CD4-positive, alpha-beta T cell (primary cell): ENCODE measurements at regions of chr3 and their contacts with region 1.

Region 1: DNA sequence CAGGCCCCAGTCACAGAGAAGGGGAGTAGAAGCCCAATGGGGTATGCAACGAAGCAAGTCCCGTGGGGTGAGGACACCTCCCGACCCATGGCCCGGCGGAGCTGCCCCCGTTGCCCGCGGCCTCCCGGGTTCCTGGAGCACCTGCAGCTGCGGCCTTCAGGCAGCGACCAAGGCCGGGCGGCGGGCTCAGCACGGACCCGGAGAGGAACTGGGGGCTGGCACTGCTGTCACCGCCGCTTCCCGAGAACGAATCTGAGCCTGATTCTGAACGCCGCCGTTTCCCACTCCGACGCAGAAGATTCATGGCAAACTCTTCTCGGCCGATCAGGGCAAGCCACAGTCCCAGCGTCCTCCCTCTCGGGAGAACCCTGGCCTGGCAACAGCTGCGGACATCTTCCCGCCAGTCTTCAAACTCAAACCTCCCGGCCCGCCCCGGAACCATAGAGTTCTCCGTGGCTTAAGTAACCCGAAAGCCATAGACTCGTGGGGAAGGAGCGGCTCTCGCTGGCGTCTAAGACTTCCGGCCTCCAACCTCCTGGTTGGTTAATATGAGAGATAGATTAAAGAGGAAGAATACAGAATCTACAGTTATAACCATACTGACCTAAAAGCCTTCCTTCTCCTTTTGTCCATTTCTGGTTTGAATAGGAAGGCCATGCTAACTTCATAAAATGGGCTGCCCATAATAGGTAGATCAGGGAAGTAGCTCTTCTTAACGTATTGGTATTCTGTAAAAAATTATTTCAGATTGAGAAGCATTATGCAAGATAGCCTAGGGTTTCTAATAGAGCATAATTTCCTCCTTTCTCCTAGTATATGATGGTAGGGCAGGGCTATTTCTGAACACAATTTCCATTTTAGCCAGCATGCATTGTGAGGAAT is at the start of gene POLQ:
- DNase-seq: peak; percentile 76 to 94 (median 84)
- ATAC-seq: peak; percentile 99
- H3K4me3 ChIP-seq: peak within 1 kb of the TSS; percentile 66
- H3K4me3 Mint-ChIP-seq: peak within 1 kb of the TSS; percentile 85
- H3K27ac ChIP-seq: peak within 1 kb of the TSS; percentile 49 to 59
- H3K27ac Mint-ChIP-seq: peak within 1 kb of the TSS; percentile 82
- H3K4me1 ChIP-seq: peaks cover 8% of the 10 kb centered on the region
- H3K4me1 Mint-ChIP-seq: peaks cover 14% of the 10 kb centered on the region
- H3K27me3 ChIP-seq: no peaks in the 10 kb centered on the region
- H3K27me3 Mint-ChIP-seq: no peaks in the 10 kb centered on the region
- CTCF ChIP-seq: no peak
- total RNA-seq, gene POLQ: 0.17 to 0.30 TPM

Region 2: GRCh38 chr3:121654493-121655385 is 108.9 kb after region 1 on chr3:
- CTCF ChIA-PET with region 1: no interaction called
- POLR2A ChIA-PET with region 1: interaction called, 3 read pairs
- intact Hi-C with region 1: loop called in 1 of 2 experiments (anchors 5 kb)
- DNase-seq: peak in 3 of 14 experiments; percentile 36 to 60 (median 40)
- ATAC-seq: peak; percentile 73
- H3K4me3 ChIP-seq: no peak overlapping the region
- H3K4me3 Mint-ChIP-seq: peak overlapping the region; percentile 34
- H3K27ac ChIP-seq: peak overlapping the region in 1 of 2 donors; percentile 62
- H3K27ac Mint-ChIP-seq: peak overlapping the region; percentile 76
- H3K4me1 ChIP-seq: peaks cover 52% of the 10 kb centered on the region
- H3K4me1 Mint-ChIP-seq: peaks cover 86% of the 10 kb centered on the region
- H3K27me3 ChIP-seq: no peaks in the 10 kb centered on the region
- H3K27me3 Mint-ChIP-seq: no peaks in the 10 kb centered on the region
- CTCF ChIP-seq: no peak

Region 3: DNA sequence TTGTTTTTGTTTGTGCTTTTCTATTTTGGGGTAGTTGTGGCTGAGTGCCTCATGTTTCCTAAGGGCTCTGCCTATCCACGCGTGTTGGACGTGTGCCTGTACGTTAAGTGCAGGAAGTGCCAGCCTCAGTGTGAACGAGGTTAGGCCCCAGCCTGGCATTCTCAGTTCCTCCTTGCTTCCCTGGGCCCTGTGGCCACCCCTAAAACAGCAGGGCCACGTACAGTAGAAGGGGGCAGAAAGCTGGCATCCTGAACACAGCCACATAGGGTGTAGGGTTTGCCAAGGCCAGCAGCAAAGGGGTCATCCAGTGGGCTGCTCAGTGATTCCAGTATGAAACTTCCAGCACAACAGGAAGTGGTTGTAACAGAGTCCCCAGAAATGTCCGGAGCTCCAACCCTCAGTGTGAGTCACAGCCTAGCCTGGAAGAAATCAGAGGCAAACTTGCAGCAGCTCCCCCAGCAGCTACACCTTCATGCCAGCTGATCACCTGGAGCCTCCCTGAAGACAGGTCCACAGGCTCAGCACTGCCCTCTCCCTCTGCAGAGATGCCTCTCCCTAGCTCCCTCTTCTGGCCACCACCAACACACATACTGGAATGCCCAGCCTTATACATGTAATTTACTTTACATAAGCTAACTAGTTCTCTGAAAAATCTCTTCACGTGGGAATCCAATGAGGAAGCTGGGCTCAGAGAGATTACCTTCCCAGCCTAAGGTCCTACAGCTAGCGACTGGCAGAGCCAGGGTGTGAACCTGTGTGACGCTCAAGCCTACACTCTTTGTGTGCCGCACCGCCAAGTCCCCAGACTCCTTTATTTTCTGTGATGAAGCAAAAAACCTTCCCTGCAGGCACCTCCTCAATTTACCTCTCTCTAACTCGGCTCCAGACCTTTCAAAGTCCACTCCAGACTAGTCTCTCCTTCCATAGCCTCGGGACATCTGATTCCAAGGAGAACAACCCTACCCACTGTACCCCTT is 449.6 kb after region 1 on chr3:
- CTCF ChIA-PET with region 1: interaction called, 3 read pairs
- POLR2A ChIA-PET with region 1: no interaction called
- intact Hi-C with region 1: loop called (anchors 2 to 5 kb)
- DNase-seq: peak in 4 of 14 experiments; percentile 39 to 63 (median 48)
- ATAC-seq: peak; percentile 57
- H3K4me3 ChIP-seq: no peak overlapping the region
- H3K4me3 Mint-ChIP-seq: no peak overlapping the region
- H3K27ac ChIP-seq: no peak overlapping the region
- H3K27ac Mint-ChIP-seq: no peak overlapping the region
- H3K4me1 ChIP-seq: peaks cover 11% of the 10 kb centered on the region
- H3K4me1 Mint-ChIP-seq: peaks cover 10% of the 10 kb centered on the region
- H3K27me3 ChIP-seq: no peaks in the 10 kb centered on the region
- H3K27me3 Mint-ChIP-seq: no peaks in the 10 kb centered on the region
- CTCF ChIP-seq: no peak

Region 4: DNA sequence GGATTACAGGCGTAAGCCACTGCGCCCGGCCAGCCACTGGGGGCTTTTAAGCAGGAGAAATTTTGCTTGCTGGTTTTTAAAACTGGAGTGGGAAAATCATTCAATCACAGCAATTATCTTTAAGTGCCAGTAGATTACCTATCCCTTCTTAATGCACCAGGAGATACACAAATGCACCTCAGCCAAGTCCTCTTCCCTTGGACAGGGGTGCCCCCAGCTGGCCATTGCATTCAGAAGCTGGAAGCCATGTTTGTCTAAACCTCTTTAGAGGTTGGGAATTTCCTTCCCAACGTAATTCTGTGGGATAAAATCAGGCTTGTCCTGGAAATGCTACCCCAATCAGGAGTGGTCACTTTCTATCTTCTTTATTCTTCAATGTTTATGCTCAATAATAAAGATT is 810.6 kb after region 1 on chr3:
- CTCF ChIA-PET with region 1: no interaction called
- POLR2A ChIA-PET with region 1: no interaction called
- intact Hi-C with region 1: loop called in 1 of 2 experiments (anchors 1 kb)
- DNase-seq: peak in 9 of 14 experiments; percentile 4 to 60 (median 11)
- ATAC-seq: no peak
- H3K4me3 ChIP-seq: no peak overlapping the region
- H3K4me3 Mint-ChIP-seq: no peak overlapping the region
- H3K27ac ChIP-seq: no peak overlapping the region
- H3K27ac Mint-ChIP-seq: no peak overlapping the region
- H3K4me1 ChIP-seq: no peaks in the 10 kb centered on the region
- H3K4me1 Mint-ChIP-seq: no peaks in the 10 kb centered on the region
- H3K27me3 ChIP-seq: no peaks in the 10 kb centered on the region
- H3K27me3 Mint-ChIP-seq: no peaks in the 10 kb centered on the region
- CTCF ChIP-seq: peak; percentile 9

Region 5: GRCh38 chr3:122793568-122794416 is 1248.0 kb after region 1 on chr3 and contains the start of gene HSPBAP1:
- CTCF ChIA-PET with region 1: no interaction called
- POLR2A ChIA-PET with region 1: no interaction called
- intact Hi-C with region 1: loop called in 1 of 2 experiments (anchors 10 kb)
- DNase-seq: peak; percentile 76 to 95 (median 86)
- ATAC-seq: peak; percentile 69
- H3K4me3 ChIP-seq: peak within 1 kb of the TSS; percentile 68
- H3K4me3 Mint-ChIP-seq: no peak within 1 kb of the TSS
- H3K27ac ChIP-seq: peak within 1 kb of the TSS; percentile 75 to 84
- H3K27ac Mint-ChIP-seq: no peak within 1 kb of the TSS
- H3K4me1 ChIP-seq: peaks cover 37% of the 10 kb centered on the region
- H3K4me1 Mint-ChIP-seq: peaks cover 37% of the 10 kb centered on the region
- H3K27me3 ChIP-seq: no peaks in the 10 kb centered on the region
- H3K27me3 Mint-ChIP-seq: no peaks in the 10 kb centered on the region
- CTCF ChIP-seq: no peak
- total RNA-seq, gene HSPBAP1: 9.3 to 11.0 TPM

Region 6: DNA sequence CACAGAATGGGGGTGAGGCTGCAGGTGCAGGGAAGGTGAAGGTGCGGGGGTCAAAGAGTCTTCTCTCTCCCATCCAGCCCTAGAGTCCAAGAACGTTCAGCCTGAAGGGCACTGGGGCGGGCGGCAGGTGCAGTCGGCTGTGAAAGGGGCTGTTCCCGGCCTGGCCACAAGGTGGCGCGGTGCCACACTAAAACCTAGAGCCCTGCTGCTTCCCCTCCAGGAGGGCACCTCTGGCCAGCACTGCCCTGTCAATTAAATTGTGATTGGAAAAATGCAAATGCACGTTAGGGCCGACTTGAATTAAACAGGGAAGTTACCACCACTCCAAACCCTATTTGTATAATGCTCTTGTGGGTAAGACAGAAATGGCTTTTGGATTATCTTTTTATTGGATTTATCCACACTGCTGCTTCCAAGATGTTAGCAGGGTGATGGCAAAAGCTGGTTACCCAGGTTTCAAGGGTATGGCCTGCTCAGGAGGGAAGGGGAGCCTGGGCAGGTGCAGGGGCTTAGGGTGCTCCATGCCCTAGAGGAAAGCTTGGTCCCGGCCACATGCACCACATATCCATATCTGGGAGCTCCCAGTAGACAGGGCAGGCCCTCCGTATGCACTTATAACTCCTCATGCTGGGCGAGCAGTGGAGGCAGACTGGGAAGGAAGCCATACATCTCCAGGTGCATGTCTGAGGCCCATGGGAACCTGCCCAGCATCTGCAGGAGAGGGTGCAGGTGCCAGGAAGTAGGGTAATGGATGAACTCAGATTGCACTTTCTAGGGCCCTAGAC is 1783.2 kb after region 1 on chr3:
- CTCF ChIA-PET with region 1: no interaction called
- POLR2A ChIA-PET with region 1: no interaction called
- intact Hi-C with region 1: loop called in 1 of 2 experiments (anchors 5 kb)
- DNase-seq: peak; percentile 35 to 80 (median 67)
- ATAC-seq: peak; percentile 63
- H3K4me3 ChIP-seq: no peak overlapping the region
- H3K4me3 Mint-ChIP-seq: no peak overlapping the region
- H3K27ac ChIP-seq: no peak overlapping the region
- H3K27ac Mint-ChIP-seq: no peak overlapping the region
- H3K4me1 ChIP-seq: peaks cover 3% of the 10 kb centered on the region
- H3K4me1 Mint-ChIP-seq: no peaks in the 10 kb centered on the region
- H3K27me3 ChIP-seq: no peaks in the 10 kb centered on the region
- H3K27me3 Mint-ChIP-seq: no peaks in the 10 kb centered on the region
- CTCF ChIP-seq: peak; percentile 86